ENCODE measurements at regions of chr1 and their contacts with region 1.

Region 1: GRCh38 chr1:51839094-51839493 is 39.4 kb downstream of the NRDC start:
- DNase-seq: no peak
- ATAC-seq: no peak
- H3K4me3 ChIP-seq: no peak overlapping the region
- H3K27ac ChIP-seq: no peak overlapping the region
- H3K4me1 ChIP-seq: no peaks in the 10 kb centered on the region; the same call in 1 of the 2 replicates
- H3K27me3 ChIP-seq: no peaks in the 10 kb centered on the region
- CTCF ChIP-seq: no peak
- POLR2A ChIP-seq: no peak
- RAD21 ChIP-seq: no peak

Region 2: GRCh38 chr1:51799372-51799771 is 39.7 kb before region 1 on chr1:
- CTCF ChIA-PET with region 1: no interaction called
- POLR2A ChIA-PET with region 1: no interaction called
- dilution Hi-C with region 1: no loop called
- in situ Hi-C with region 1: no loop called
- intact Hi-C with region 1: loop called (anchors 5 kb)
- DNase-seq: no peak
- ATAC-seq: no peak
- H3K4me3 ChIP-seq: no peak overlapping the region
- H3K27ac ChIP-seq: no peak overlapping the region
- H3K4me1 ChIP-seq: no peaks in the 10 kb centered on the region
- H3K27me3 ChIP-seq: no peaks in the 10 kb centered on the region
- CTCF ChIP-seq: no peak
- POLR2A ChIP-seq: no peak
- RAD21 ChIP-seq: no peak

Measured in IMR-90 (cell line).